WTC11 (cell line): ENCODE measurements at regions of chr1 and their contacts with region 1.

Region 1: DNA sequence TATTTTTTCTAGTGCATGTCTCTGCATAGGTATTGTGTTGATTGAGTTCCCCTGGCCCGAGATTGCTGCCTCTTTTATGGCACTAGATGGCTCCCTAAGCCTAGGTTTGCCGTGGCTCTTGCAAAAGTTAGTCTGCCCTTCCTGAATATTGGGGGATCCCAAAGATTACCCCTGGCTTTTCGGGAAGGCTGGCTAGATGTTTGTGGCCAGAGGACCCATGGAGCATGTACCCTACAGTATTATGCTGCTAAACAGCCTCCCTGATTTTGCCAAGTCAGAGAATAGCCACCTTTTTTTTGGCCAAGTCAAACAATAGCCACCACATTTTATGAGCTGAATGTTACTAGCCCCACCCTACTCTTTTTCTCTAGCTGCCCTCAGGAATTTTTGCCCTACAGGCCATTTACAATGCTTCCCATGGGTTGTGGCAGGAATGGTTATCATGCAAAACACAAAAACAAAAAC is 343.2 kb downstream of the OLFM3 start:
- DNase-seq: peak; percentile 68
- ATAC-seq: peak; percentile 93
- H3K4me3 Mint-ChIP-seq: no peak overlapping the region
- H3K27ac Mint-ChIP-seq: peak overlapping the region; percentile 97
- H3K4me1 Mint-ChIP-seq: peaks cover 26% of the 10 kb centered on the region
- H3K27me3 Mint-ChIP-seq: no peaks in the 10 kb centered on the region
- CTCF ChIP-seq: peak; percentile 28; the same call in 1 of the 2 replicates

Region 2: GRCh38 chr1:101278845-101279244 is 374.7 kb before region 1 on chr1:
- CTCF ChIA-PET with region 1: no interaction called
- POLR2A ChIA-PET with region 1: no interaction called
- DNase-seq: no peak
- ATAC-seq: no peak
- H3K4me3 Mint-ChIP-seq: no peak overlapping the region
- H3K27ac Mint-ChIP-seq: no peak overlapping the region
- H3K4me1 Mint-ChIP-seq: peaks cover 5% of the 10 kb centered on the region
- H3K27me3 Mint-ChIP-seq: no peaks in the 10 kb centered on the region
- CTCF ChIP-seq: no peak

Region 3: DNA sequence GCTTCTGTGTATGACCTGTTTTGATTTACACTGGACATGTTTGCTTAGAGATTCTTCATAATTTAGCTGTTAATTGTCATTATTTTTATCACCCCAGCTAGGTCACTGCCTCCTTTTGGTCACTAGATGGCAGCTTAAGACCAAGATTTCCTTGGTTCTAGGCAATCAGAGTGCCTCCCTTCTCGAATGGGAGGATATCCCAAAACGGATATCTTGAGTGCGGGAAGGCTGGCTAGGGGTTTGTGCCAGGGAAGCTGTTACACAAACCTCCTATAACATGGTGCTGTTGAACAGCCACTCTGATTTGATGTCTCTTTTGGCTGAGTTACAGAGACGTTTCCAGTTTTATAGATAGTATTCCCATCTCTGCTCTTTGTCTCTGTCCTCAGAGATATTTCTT is 133.2 kb before region 1 on chr1:
- CTCF ChIA-PET with region 1: interaction called, 13 read pairs
- POLR2A ChIA-PET with region 1: no interaction called
- DNase-seq: peak; percentile 39
- ATAC-seq: peak; percentile 99
- H3K4me3 Mint-ChIP-seq: no peak overlapping the region
- H3K27ac Mint-ChIP-seq: no peak overlapping the region
- H3K4me1 Mint-ChIP-seq: no peaks in the 10 kb centered on the region; the same call in 1 of the 2 replicates
- H3K27me3 Mint-ChIP-seq: no peaks in the 10 kb centered on the region; the same call in 1 of the 2 replicates
- CTCF ChIP-seq: peak; percentile 60; the same call in 1 of the 2 replicates

Region 4: GRCh38 chr1:101664726-101665125 is 11.2 kb after region 1 on chr1:
- CTCF ChIA-PET with region 1: interaction called, 12 read pairs
- POLR2A ChIA-PET with region 1: no interaction called
- DNase-seq: no peak
- ATAC-seq: no peak
- H3K4me3 Mint-ChIP-seq: no peak overlapping the region
- H3K27ac Mint-ChIP-seq: no peak overlapping the region
- H3K4me1 Mint-ChIP-seq: 0 out of 2 replicates have a peak, but pooled peaks cover 2% of the 10 kb centered on the region
- H3K27me3 Mint-ChIP-seq: no peaks in the 10 kb centered on the region
- CTCF ChIP-seq: no peak

Region 5: DNA sequence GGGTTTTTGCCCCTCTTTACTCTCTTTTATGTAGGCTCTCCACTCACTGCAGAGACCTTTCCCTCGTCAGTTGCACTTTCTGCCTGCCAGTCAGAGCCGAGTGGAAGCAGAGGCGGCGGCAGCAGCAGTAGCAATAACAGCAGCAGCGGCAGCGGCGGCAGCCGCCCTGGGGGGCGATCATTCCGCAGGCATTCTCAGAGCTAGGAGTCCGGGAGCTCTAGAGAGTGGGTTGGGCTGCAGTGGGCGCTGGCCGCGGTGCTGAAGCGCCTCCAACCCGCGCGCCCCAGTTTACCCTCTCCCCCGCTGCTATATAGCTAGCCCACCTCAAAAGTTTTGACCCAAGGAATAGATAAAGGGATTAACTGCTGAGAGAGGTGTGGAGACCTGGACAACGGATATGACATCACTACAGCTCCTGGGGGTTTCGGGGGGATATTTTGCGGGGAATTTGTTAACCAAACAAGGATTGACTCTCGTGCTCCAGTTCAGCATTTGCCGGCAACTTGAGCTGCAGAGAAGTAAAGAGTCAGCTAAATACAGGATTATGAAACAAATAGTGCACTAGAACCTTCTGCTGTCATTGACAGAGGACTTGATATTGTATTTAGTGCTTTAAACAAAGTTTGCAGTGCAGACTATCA is 343.4 kb after region 1 on chr1 and contains the start of gene OLFM3:
- CTCF ChIA-PET with region 1: interaction called, 18 read pairs
- POLR2A ChIA-PET with region 1: no interaction called
- DNase-seq: peak; percentile 84
- ATAC-seq: peak; percentile 98
- H3K4me3 Mint-ChIP-seq: peak within 1 kb of the TSS; percentile 86
- H3K27ac Mint-ChIP-seq: no peak within 1 kb of the TSS
- H3K4me1 Mint-ChIP-seq: peaks cover 6% of the 10 kb centered on the region
- H3K27me3 Mint-ChIP-seq: peaks cover 7% of the 10 kb centered on the region
- CTCF ChIP-seq: no peak
- total RNA-seq, gene OLFM3: 0.25 to 0.37 TPM (median 0.32 TPM) in 3 replicates